ENCODE measurements at regions of chr5 and their contacts with region 1.

Region 1: GRCh38 chr5:94968507-94969095 is 316.3 kb downstream of the MCTP1 start:
- DNase-seq: no peak
- ATAC-seq: peak; percentile 72
- H3K4me3 Mint-ChIP-seq: no peak overlapping the region
- H3K27ac Mint-ChIP-seq: no peak overlapping the region
- H3K4me1 Mint-ChIP-seq: peaks cover 5% of the 10 kb centered on the region
- H3K27me3 Mint-ChIP-seq: no peaks in the 10 kb centered on the region
- CTCF ChIP-seq: peak; percentile 55

Region 2: DNA sequence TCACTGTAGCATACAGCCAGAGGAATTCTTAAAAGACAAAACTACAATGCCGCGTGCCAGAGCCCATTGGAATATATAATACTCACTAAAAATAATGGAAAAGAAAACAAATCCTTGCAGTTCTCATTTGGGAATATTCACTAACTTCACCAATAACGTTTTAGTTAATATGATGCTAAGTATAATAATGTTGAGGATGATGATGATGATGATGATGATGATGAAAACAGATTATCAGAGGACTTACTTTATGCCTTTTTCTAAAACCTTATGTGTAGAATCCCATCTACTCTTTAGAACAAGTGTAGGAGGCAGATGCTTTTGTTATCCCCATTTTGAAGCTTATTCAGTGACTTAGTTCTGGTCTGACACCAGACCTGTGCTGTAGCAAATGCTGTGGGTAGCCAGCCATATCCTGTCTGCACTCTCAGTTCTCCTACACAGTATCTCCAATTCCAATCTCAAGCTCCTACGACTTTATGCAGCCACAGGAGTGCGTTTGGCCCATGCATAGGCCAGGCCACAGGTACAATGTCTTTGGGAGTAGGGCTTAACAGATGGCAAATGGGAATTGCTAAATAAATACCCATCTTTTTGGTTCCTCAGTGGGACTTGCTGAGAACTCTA is 23.6 kb after region 1 on chr5:
- CTCF ChIA-PET with region 1: no interaction called
- POLR2A ChIA-PET with region 1: no interaction called
- DNase-seq: no peak
- ATAC-seq: peak; percentile 55; the same call in 1 of the 2 replicates
- H3K4me3 Mint-ChIP-seq: no peak overlapping the region
- H3K27ac Mint-ChIP-seq: no peak overlapping the region
- H3K4me1 Mint-ChIP-seq: peaks cover 25% of the 10 kb centered on the region
- H3K27me3 Mint-ChIP-seq: no peaks in the 10 kb centered on the region; the same call in 1 of the 2 replicates
- CTCF ChIP-seq: no peak

Region 3: DNA sequence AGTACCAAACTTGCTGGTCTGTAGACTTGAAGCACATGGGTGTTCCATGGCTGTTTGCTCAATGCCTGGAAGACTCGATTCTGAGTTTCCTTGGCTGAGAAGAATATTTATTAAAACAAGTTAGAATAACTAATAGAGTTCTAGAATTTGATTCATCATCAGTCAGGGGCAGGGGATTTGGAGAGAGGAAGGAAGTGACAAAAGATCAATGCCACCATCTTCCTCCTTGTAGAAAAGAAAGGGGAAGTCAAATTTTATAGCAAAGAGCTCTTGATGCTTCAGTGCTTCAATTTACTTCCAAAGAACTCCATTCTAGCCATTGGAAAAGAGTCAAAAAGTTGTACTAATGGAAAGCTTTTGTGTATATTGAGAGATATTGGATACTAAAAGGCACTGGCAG is 80.0 kb after region 1 on chr5:
- CTCF ChIA-PET with region 1: no interaction called
- POLR2A ChIA-PET with region 1: no interaction called
- DNase-seq: no peak
- ATAC-seq: no peak
- H3K4me3 Mint-ChIP-seq: no peak overlapping the region
- H3K27ac Mint-ChIP-seq: no peak overlapping the region
- H3K4me1 Mint-ChIP-seq: peaks cover 16% of the 10 kb centered on the region
- H3K27me3 Mint-ChIP-seq: no peaks in the 10 kb centered on the region
- CTCF ChIP-seq: no peak

Region 4: GRCh38 chr5:95178046-95178651 is 209.5 kb after region 1 on chr5:
- CTCF ChIA-PET with region 1: interaction called, 22 read pairs
- POLR2A ChIA-PET with region 1: no interaction called
- DNase-seq: peak; percentile 80
- ATAC-seq: peak; percentile 97
- H3K4me3 Mint-ChIP-seq: no peak overlapping the region
- H3K27ac Mint-ChIP-seq: peak overlapping the region; percentile 92
- H3K4me1 Mint-ChIP-seq: peaks cover 74% of the 10 kb centered on the region
- H3K27me3 Mint-ChIP-seq: no peaks in the 10 kb centered on the region
- CTCF ChIP-seq: no peak

Region 5: GRCh38 chr5:95283761-95284415 is 315.3 kb after region 1 on chr5:
- CTCF ChIA-PET with region 1: interaction called, 24 read pairs
- POLR2A ChIA-PET with region 1: no interaction called
- DNase-seq: peak; percentile 73
- ATAC-seq: peak; percentile 34
- H3K4me3 Mint-ChIP-seq: peak overlapping the region; percentile 73
- H3K27ac Mint-ChIP-seq: no peak overlapping the region
- H3K4me1 Mint-ChIP-seq: peaks cover 52% of the 10 kb centered on the region
- H3K27me3 Mint-ChIP-seq: peaks cover 24% of the 10 kb centered on the region
- CTCF ChIP-seq: no peak

Measured in WTC11 (cell line).